AG04449 (cell line): ENCODE measurements at regions of chr12 and their contacts with region 1.

Region 1: GRCh38 chr12:105330931-105331804 is 677 bp downstream of the C12orf75 start:
- DNase-seq: no peak
- H3K4me3 ChIP-seq: peak overlapping the region; percentile 74
- CTCF ChIP-seq: no peak

Region 2: GRCh38 chr12:105235732-105236476 is 95.3 kb before region 1 on chr12 and contains the start of gene APPL2:
- CTCF ChIA-PET with region 1: no interaction called
- POLR2A ChIA-PET with region 1: interaction called, 10 read pairs
- DNase-seq: no peak
- H3K4me3 ChIP-seq: peak within 1 kb of the TSS; percentile 78
- CTCF ChIP-seq: no peak

Region 3: GRCh38 chr12:105317942-105318621 is 13.1 kb before region 1 on chr12:
- CTCF ChIA-PET with region 1: interaction called, 12 read pairs
- POLR2A ChIA-PET with region 1: interaction called, 10 read pairs
- DNase-seq: no peak
- H3K4me3 ChIP-seq: no peak overlapping the region
- CTCF ChIP-seq: no peak